CD8-positive, alpha-beta memory T cell (primary cell): ENCODE measurements at regions of chr15 and their contacts with region 1.

Region 1: DNA sequence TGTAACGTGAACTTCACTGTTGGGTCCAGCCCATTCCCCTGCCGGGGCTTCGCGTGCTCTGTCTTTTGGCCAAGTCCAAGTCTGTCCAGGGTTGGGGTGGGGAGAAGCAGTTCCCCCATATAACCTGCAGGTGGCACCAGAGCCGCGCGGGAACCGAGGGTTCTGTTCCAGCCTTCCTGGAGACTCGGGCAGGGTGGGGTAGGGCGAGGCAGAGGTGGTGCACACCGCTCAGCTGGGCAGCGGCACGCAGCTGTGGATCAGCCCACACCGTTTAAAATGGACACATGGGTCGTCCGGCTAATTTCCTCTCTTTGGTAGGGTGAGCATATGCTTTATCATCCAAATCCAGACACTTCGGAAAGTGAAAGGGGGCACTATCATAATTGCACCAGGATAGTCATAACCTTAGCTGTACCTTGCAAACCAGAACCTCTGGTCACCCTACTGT is 118.1 kb downstream of the TBC1D2B start:
- DNase-seq: peak; percentile 55 to 81 (median 63)
- H3K4me3 ChIP-seq: no peak overlapping the region
- H3K4me3 Mint-ChIP-seq: peak overlapping the region in 1 of 7 donors; percentile 27
- H3K27ac ChIP-seq: no peak overlapping the region
- H3K27ac Mint-ChIP-seq: no peak overlapping the region
- H3K4me1 ChIP-seq: no peaks in the 10 kb centered on the region
- H3K4me1 Mint-ChIP-seq: peaks cover 5 to 12% (median 7%) of the 10 kb centered on the region in 3 donors
- H3K27me3 ChIP-seq: no peaks in the 10 kb centered on the region
- H3K27me3 Mint-ChIP-seq: peaks cover 2 to 6% of the 10 kb centered on the region in 2 donors

Region 2: GRCh38 chr15:77975332-77976094 is 16.1 kb after region 1 on chr15:
- CTCF ChIA-PET with region 1: no interaction called
- POLR2A ChIA-PET with region 1: no interaction called
- DNase-seq: no peak
- H3K4me3 ChIP-seq: no peak overlapping the region
- H3K4me3 Mint-ChIP-seq: no peak overlapping the region
- H3K27ac ChIP-seq: no peak overlapping the region
- H3K27ac Mint-ChIP-seq: no peak overlapping the region
- H3K4me1 ChIP-seq: no peaks in the 10 kb centered on the region
- H3K4me1 Mint-ChIP-seq: no peaks in the 10 kb centered on the region
- H3K27me3 ChIP-seq: no peaks in the 10 kb centered on the region
- H3K27me3 Mint-ChIP-seq: peaks cover 0 to 3% of the 10 kb centered on the region in 2 donors

Region 3: DNA sequence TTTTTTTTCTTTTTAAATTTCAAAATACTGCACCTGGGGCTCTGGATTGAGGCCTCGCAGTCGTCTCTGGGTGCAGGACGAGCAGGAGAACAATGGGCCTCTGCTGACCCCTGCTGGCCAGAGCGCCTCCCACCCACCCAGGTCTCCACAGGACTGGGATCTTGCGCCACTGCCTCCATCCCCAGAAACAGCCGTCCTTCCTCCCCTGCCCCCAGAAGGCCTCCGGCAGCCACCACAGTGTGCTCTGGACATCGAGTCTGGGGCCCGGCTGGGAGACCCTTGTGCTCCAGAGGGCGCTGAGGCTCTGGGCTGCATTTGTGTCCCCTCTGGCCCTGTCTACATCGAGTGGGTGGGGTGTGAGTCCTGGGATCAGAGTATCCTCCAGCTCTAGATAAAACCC is 281.6 kb after region 1 on chr15:
- CTCF ChIA-PET with region 1: interaction called, 14 read pairs
- POLR2A ChIA-PET with region 1: no interaction called
- DNase-seq: peak; percentile 64 to 85 (median 71)
- H3K4me3 ChIP-seq: no peak overlapping the region
- H3K4me3 Mint-ChIP-seq: no peak overlapping the region
- H3K27ac ChIP-seq: no peak overlapping the region
- H3K27ac Mint-ChIP-seq: peak overlapping the region in 1 of 8 donors; percentile 63
- H3K4me1 ChIP-seq: no peaks in the 10 kb centered on the region
- H3K4me1 Mint-ChIP-seq: peaks cover 2 to 4% (median 3%) of the 10 kb centered on the region in 3 donors
- H3K27me3 ChIP-seq: no peaks in the 10 kb centered on the region
- H3K27me3 Mint-ChIP-seq: peaks cover 0 to 6% of the 10 kb centered on the region in 2 donors